Heart left ventricle (tissue), 16 donors: ENCODE measurements at regions of chr6 and their contacts with region 1.

Region 1: GRCh38 chr6:76861403-76861802 is 601.9 kb downstream of the HTR1B start:
- DNase-seq: no peak
- ATAC-seq: peak in 1 of 4 donors; percentile 51
- H3K4me3 ChIP-seq: no peak overlapping the region
- H3K27ac ChIP-seq: no peak overlapping the region
- H3K4me1 ChIP-seq: peaks cover 0 to 7% (median 0%) of the 10 kb centered on the region in 12 donors
- H3K27me3 ChIP-seq: no peaks in the 10 kb centered on the region
- CTCF ChIP-seq: peak in 7 of 12 donors; percentile 11 to 43 (median 29)
- POLR2A ChIP-seq: no peak

Region 2: GRCh38 chr6:75946146-75946831 is 915.1 kb before region 1 on chr6:
- intact Hi-C with region 1: loop called in 1 of 10 experiments (anchors 10 kb)
- DNase-seq: no peak
- ATAC-seq: no peak
- H3K4me3 ChIP-seq: no peak overlapping the region
- H3K27ac ChIP-seq: no peak overlapping the region
- H3K4me1 ChIP-seq: peaks cover 0 to 1% (median 0%) of the 10 kb centered on the region in 12 donors
- H3K27me3 ChIP-seq: no peaks in the 10 kb centered on the region
- CTCF ChIP-seq: no peak
- POLR2A ChIP-seq: no peak

Region 3: DNA sequence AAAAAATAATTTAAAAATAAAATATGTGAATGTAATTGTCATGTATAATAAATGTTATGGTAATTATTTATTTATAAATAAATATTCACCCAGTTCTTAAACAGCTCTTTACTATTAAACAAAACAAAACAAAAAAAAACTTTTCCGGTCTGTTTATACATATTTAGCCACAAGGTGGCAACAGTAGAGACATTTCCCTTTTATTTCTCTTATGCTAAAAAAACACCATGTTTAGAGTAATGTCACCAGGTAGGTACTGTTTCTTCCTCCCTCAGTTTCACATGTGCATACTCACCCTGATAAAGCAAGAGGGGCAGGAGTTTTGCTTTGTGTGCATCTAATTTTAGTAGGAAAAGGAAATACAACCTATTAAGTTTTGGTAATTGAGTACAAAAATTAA is 178.6 kb before region 1 on chr6:
- intact Hi-C with region 1: loop called in 2 of 10 experiments (anchors 10 kb)
- DNase-seq: no peak
- ATAC-seq: no peak
- H3K4me3 ChIP-seq: no peak overlapping the region
- H3K27ac ChIP-seq: no peak overlapping the region
- H3K4me1 ChIP-seq: no peaks in the 10 kb centered on the region
- H3K27me3 ChIP-seq: no peaks in the 10 kb centered on the region
- CTCF ChIP-seq: peak in 11 of 12 donors; percentile 23 to 54 (median 41)
- POLR2A ChIP-seq: no peak

Region 4: DNA sequence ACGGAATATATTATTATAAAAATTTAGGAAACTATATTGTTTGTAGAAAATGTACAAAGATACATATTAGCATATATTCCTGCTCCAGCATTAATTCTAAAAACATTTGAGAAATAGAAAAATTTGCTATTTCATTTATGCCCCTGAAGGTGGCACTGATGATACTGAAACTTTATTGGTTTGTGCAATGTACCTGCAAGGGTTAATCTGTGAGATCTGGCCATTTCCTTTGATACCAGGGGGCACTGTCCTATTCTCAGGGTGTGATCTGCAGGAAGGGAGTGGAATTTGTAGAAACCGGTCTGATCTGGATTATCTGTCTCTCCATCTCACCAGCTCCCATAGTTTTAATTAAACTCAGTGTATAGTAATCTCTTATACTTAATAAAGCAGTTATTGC is 163.8 kb before region 1 on chr6:
- intact Hi-C with region 1: loop called in 3 of 10 experiments (anchors 10 kb)
- DNase-seq: no peak
- ATAC-seq: no peak
- H3K4me3 ChIP-seq: no peak overlapping the region
- H3K27ac ChIP-seq: no peak overlapping the region
- H3K4me1 ChIP-seq: no peaks in the 10 kb centered on the region
- H3K27me3 ChIP-seq: no peaks in the 10 kb centered on the region
- CTCF ChIP-seq: no peak
- POLR2A ChIP-seq: no peak

Region 5: GRCh38 chr6:76814496-76815458 is 46.6 kb before region 1 on chr6:
- intact Hi-C with region 1: loop called in 1 of 10 experiments (anchors 10 kb)
- DNase-seq: no peak
- ATAC-seq: peak; percentile 43 to 77 (median 62)
- H3K4me3 ChIP-seq: peak overlapping the region in 2 of 12 donors; percentile 0 to 2
- H3K27ac ChIP-seq: peak overlapping the region in 2 of 12 donors; percentile 11 to 18
- H3K4me1 ChIP-seq: peaks cover 0 to 18% (median 0%) of the 10 kb centered on the region in 12 donors
- H3K27me3 ChIP-seq: no peaks in the 10 kb centered on the region
- CTCF ChIP-seq: no peak
- POLR2A ChIP-seq: no peak